Activated T-helper 1 cell treated with anti-CD3 and anti-CD28 coated beads, Interleukin-12 subunit alpha, Interleukin-12 subunit beta, Interleukin-2, Interleukin-4 antibody, amounts not matched to agents 30 ng/mL and 10 ng/mL and 1 ng/mL, durations not matched to agents 14 hours and 24 hours and 36 hours (primary cell): ENCODE measurements at regions of chr1 and their contacts with region 1.

Region 1: DNA sequence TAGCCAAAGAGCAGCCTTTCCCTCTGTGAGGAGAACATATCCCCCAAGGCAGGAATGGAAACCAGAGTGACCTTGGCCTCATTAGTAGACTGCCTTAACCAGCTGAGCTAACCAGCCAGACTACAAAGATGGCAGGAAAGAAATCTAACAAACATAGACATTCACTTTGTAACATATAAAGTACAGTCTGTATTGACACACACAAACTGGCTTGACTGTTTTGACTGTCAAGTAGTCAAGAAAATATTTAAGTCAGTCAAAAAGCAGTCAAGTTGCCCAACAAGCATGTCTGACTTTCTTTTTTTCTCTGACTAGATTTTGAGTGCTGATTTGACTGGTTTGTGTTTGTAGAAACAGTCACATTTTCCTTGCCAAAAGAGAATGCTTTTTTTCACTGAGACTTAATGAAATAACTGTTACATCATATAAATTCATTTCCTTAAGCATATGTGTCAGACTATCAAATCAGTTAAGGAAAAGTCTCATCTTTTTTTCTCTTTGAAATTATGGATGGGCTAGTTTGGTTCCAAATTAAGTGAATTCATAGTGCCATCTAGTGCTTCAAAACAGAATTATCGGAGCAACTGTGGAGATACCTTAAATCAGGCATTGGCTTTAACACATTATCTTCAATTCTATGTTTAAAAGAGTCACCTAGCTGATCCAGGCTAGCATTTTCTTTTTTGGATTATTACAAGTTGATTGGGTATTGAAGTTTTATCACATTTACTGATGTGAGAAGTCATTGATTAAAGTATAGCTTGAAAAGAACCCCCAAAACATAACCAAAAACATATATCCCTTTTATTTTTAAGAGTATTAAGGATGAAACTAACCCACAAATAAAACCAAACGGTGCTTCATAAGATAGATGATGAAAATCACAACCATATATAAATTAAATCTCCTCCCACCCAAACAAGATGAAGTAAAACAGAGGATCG is 75.0 kb downstream of the ATP6V1G3 start:
- DNase-seq: no peak
- H3K4me3 Mint-ChIP-seq: no peak overlapping the region
- H3K27ac Mint-ChIP-seq: no peak overlapping the region
- H3K4me1 Mint-ChIP-seq: peaks cover 13% of the 10 kb centered on the region
- H3K27me3 Mint-ChIP-seq: no peaks in the 10 kb centered on the region

Region 2: DNA sequence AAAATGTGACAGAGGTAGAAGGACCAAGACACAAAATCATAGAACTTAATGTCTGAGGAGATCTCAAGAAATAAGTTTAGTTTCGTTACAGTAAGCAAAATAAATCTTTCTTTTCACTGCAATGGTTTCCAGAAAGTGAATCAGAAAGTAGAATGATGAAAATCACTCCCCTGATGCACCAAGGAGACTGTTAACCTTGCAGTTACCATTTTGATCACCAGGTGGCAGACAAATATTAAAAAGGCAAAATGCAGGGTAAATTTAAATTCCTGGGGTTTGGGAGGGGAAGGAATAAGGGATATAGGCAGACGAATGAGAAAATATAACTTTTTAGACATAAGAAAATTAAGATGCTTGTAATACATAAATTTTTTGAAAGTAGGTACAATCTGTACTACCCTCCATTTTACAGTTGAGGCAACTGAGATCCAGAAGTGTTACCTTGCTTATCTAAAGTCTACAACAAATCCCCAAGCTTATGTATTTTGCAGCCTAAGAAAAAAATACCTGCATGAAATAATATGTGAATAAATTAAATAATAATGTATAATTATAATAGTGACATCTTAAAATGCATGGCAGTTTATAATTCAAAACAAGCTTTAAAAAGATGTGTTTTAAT is 944.2 kb before region 1 on chr1:
- intact Hi-C with region 1: loop called (anchors 1 kb)
- DNase-seq: no peak
- H3K4me3 Mint-ChIP-seq: no peak overlapping the region
- H3K27ac Mint-ChIP-seq: no peak overlapping the region
- H3K4me1 Mint-ChIP-seq: peaks cover 7% of the 10 kb centered on the region
- H3K27me3 Mint-ChIP-seq: no peaks in the 10 kb centered on the region

Region 3: GRCh38 chr1:197862671-197863070 is 602.8 kb before region 1 on chr1:
- intact Hi-C with region 1: no loop called
- DNase-seq: no peak
- H3K4me3 Mint-ChIP-seq: no peak overlapping the region
- H3K27ac Mint-ChIP-seq: no peak overlapping the region
- H3K4me1 Mint-ChIP-seq: no peaks in the 10 kb centered on the region
- H3K27me3 Mint-ChIP-seq: peaks cover 13% of the 10 kb centered on the region

Region 4: DNA sequence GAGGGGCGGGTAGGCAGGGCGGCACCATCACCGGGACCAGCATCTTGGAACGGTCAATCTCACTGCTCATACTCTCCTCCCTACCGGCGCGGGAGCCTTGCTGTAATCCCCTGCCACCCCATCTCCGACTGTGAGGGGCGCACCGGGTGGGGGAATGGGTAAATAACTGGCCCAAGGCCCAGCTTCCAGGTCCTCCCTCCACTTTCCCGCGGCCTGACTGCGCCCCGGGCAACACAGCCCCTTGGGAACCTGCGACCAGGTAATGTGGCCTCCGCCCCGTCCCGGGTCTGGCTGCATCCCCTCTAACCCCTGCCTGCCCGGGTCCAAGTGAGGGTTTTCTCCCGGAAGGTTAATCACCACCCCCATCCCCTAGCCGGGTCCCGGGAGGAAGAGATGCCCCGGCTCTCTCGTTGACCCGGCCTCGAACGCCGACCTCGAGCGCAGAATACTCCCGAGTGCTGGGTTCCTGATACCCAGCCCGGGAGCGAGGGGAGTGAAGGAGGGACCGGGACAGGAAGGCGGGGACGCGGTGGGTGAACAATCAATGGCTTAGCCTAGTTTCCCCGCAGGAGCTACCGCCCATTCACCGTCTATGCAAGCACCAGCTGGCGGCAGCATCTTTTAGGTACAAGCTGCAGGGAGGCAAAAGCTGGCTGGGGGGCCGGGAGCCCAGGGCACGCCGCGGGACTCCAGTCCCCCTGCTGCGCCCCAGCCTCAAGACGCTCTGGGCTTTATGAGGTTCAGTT is 554.2 kb before region 1 on chr1:
- intact Hi-C with region 1: loop called (anchors 5 kb)
- DNase-seq: no peak
- H3K4me3 Mint-ChIP-seq: peak overlapping the region; percentile 83
- H3K27ac Mint-ChIP-seq: peak overlapping the region; percentile 84
- H3K4me1 Mint-ChIP-seq: peaks cover 55% of the 10 kb centered on the region
- H3K27me3 Mint-ChIP-seq: peaks cover 95% of the 10 kb centered on the region

Region 5: DNA sequence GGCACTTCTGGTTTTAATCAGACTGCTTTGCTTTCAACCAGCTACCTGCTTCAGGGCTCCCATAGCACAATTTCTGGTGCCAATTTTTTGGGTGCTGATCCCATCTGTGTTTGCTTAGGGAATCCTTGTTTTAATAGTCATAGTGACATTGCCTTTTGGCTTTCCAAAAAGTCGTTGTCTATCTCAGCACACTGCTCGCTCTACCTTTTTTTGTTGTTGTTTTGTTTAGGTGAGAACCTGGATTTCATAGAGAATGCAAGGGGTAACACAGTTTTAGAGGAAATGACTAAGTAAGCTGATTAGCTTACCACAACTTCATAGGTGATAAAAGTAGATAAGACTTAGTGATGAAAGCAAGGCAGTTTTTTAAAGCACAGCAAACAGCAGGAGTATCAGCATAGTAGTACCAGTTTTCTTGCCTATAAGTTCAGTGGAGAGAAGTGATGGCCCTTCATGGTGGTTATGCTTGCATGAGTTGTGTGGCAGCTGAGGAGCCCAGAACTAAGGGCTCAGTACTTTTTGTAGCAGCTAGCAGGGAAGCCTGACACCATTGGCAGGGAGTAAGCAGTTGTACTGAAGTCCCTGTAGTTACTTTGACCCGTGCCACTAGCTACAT is 277.4 kb before region 1 on chr1:
- intact Hi-C with region 1: loop called (anchors 5 kb)
- DNase-seq: no peak
- H3K4me3 Mint-ChIP-seq: peak overlapping the region; percentile 49
- H3K27ac Mint-ChIP-seq: peak overlapping the region; percentile 78
- H3K4me1 Mint-ChIP-seq: peaks cover 67% of the 10 kb centered on the region
- H3K27me3 Mint-ChIP-seq: no peaks in the 10 kb centered on the region

Region 6: GRCh38 chr1:198638894-198639635 is 173.6 kb after region 1 on chr1 and contains the start of gene PTPRC:
- intact Hi-C with region 1: loop called (anchors 5 kb)
- DNase-seq: no peak
- H3K4me3 Mint-ChIP-seq: peak within 1 kb of the TSS; percentile 92
- H3K27ac Mint-ChIP-seq: peak within 1 kb of the TSS; percentile 96
- H3K4me1 Mint-ChIP-seq: peaks cover 54% of the 10 kb centered on the region
- H3K27me3 Mint-ChIP-seq: no peaks in the 10 kb centered on the region
- total RNA-seq, gene PTPRC: 512 and 516 TPM in 2 replicates